Panc1 (cell line): ENCODE measurements at regions of chr4 and their contacts with region 1.

Region 1: DNA sequence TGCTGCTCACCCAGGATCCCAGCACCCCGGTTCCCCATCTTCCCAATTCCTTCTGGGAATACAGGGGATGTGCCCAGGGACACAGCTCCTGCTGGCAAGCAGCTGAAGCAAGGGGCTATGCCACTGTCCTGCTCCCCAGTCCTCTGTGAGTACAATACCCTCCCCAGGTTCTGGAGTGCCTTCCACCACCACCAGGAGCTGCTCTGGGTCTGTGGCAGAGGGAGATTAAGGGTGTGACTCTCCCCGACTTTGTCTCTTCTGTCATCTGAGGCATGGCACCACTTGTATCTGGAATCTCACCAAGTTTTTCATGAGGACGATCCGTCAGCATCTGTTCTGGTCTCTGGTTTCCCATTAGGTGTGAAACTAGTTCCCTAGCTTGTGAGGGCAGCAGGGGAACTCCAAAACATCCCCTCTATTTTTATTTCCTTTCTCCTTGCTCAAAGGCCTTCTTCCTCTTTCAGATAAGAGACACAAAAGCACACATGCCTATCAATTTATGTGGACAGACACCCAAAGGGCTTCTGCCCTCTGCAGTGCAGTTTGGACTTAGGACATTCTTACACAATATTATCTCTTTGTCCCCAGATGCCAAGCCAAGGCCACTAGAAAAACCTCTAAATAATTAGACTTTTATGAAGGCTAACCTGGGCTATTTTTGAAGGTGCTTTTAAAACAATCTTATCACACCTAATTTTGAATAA is 26.8 kb downstream of the MGST2 start:
- DNase-seq: no peak
- ATAC-seq: no peak
- H3K4me3 ChIP-seq: no peak overlapping the region
- H3K27ac ChIP-seq: no peak overlapping the region
- H3K4me1 ChIP-seq: no peaks in the 10 kb centered on the region
- H3K27me3 ChIP-seq: no peaks in the 10 kb centered on the region
- CTCF ChIP-seq: peak; percentile 32; the same call in 1 of the 2 replicates

Region 2: GRCh38 chr4:139330283-139330682 is 362.2 kb before region 1 on chr4:
- CTCF ChIA-PET with region 1: no interaction called
- POLR2A ChIA-PET with region 1: no interaction called
- in situ Hi-C with region 1: no loop called
- intact Hi-C with region 1: no loop called
- DNase-seq: no peak
- ATAC-seq: no peak
- H3K4me3 ChIP-seq: no peak overlapping the region
- H3K27ac ChIP-seq: no peak overlapping the region
- H3K4me1 ChIP-seq: no peaks in the 10 kb centered on the region; the same call in 1 of the 2 replicates
- H3K27me3 ChIP-seq: no peaks in the 10 kb centered on the region
- CTCF ChIP-seq: no peak

Region 3: GRCh38 chr4:140195806-140196205 is 503.3 kb after region 1 on chr4:
- CTCF ChIA-PET with region 1: interaction called, 11 read pairs
- POLR2A ChIA-PET with region 1: no interaction called
- in situ Hi-C with region 1: no loop called
- intact Hi-C with region 1: no loop called
- DNase-seq: no peak
- ATAC-seq: no peak
- H3K4me3 ChIP-seq: no peak overlapping the region
- H3K27ac ChIP-seq: no peak overlapping the region
- H3K4me1 ChIP-seq: no peaks in the 10 kb centered on the region
- H3K27me3 ChIP-seq: no peaks in the 10 kb centered on the region
- CTCF ChIP-seq: no peak